ENCODE measurements at regions of chr1 and their contacts with region 1.

Region 1: DNA sequence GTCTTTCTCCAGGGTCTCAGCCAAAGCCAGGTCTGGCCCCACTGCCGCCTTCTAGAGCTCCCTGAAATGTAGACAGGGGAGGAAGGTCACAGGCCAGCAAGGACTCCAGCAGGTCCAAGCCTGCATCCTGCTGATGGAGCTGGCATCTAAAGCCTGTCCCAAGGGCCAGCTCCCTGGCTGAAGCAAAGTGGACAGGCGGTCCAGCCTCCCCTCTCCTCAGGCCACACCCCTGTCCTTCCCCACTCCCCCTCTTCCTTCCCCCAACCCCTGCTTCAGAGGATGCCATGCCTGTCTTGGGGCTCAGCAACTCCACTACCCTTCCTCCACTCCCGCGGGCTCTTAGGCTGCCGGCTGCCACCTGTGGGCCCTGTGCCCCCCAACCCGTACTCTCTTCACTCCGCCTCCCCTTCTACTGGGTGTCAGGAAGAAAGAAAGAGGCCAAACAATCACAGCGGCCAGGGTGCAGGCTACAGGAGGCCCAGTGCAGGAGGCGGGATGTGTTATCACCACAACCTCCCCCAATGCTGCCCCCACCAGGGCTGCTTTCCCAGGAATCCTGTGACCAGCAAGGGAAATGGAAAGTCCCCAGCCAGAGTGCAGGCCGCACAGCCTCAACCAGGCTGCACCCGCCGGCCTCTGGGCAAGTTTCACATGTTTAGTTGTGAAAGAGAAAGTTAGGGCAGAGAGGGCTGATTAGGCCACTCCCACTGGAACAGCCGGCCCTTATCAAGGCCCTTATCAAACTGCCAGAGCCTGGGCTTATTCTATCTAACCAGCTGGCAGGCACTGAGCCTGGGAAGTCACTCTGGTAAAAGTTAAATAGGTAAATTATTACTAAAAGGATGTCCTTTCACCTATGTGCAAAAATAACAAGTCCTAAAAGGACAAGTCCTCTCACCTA is 34.1 kb downstream of the ACOT7 start:
- DNase-seq: no peak
- ATAC-seq: peak in 1 of 2 donors; percentile 27
- H3K4me3 ChIP-seq: no peak overlapping the region
- H3K27ac ChIP-seq: peak overlapping the region in 3 of 4 donors; percentile 42 to 64 (median 60)
- H3K4me1 ChIP-seq: peaks cover under 1 to 9% of the 10 kb centered on the region in 2 donors
- H3K27me3 ChIP-seq: no peaks in the 10 kb centered on the region
- CTCF ChIP-seq: no peak
- POLR2A ChIP-seq: no peak

Region 2: DNA sequence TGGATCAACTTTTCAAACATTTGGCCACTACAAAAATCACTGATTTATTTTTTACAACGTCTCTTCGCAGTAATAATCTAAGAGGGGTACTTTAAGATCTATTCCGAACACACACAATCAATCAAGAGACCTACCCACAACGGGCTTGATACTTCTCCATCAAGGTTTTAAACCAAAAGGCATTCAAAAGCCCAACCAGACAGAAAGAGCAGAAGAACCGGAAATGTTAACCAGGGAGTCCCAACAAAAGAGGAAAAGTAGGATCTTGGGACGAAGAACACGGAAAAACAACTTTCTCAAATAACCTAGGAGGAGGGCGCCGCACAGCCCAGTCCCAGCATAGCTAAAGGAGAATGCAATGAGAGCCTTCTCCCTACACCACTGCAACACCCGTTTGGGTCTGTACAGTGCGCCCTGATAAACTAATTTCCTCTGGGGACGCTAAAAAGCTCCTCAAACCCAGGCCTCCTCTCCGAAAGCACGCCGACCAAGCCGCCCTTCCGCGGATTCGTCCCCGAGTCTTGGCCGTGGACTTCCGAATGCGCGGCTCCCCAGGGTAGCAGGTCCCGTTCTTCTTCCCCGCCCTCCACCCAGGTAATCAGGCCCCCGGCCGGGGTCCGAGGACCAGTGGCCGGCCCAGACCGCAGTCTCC is 160.7 kb before region 1 on chr1:
- in situ Hi-C with region 1: no loop called
- intact Hi-C with region 1: no loop called
- DNase-seq: no peak
- ATAC-seq: peak; percentile 7 to 15
- H3K4me3 ChIP-seq: peak overlapping the region; percentile 78 to 96 (median 91)
- H3K27ac ChIP-seq: peak overlapping the region; percentile 82 to 84 (median 83)
- H3K4me1 ChIP-seq: peaks cover 13 to 21% of the 10 kb centered on the region in 2 donors
- H3K27me3 ChIP-seq: no peaks in the 10 kb centered on the region
- CTCF ChIP-seq: no peak
- POLR2A ChIP-seq: no peak

Region 3: GRCh38 chr1:6259491-6260425 is 99.7 kb before region 1 on chr1:
- in situ Hi-C with region 1: no loop called
- intact Hi-C with region 1: no loop called
- DNase-seq: peak; percentile 50 to 59
- ATAC-seq: peak; percentile 50 to 63
- H3K4me3 ChIP-seq: peak overlapping the region; percentile 49 to 56 (median 54)
- H3K27ac ChIP-seq: peak overlapping the region in 3 of 4 donors; percentile 34 to 61 (median 49)
- H3K4me1 ChIP-seq: peaks cover 0 to 16% of the 10 kb centered on the region in 2 donors
- H3K27me3 ChIP-seq: peaks cover 30 to 51% (median 44%) of the 10 kb centered on the region in 3 donors
- CTCF ChIP-seq: peak in 1 of 5 experiments; percentile 10
- POLR2A ChIP-seq: no peak

Region 4: GRCh38 chr1:6419397-6419803 is 59.9 kb after region 1 on chr1:
- in situ Hi-C with region 1: no loop called
- intact Hi-C with region 1: no loop called
- DNase-seq: no peak
- ATAC-seq: no peak
- H3K4me3 ChIP-seq: peak overlapping the region; percentile 37 to 57 (median 41)
- H3K27ac ChIP-seq: no peak overlapping the region
- H3K4me1 ChIP-seq: peaks cover 17 to 25% of the 10 kb centered on the region in 2 donors
- H3K27me3 ChIP-seq: peaks cover 94 to 98% (median 98%) of the 10 kb centered on the region in 3 donors
- CTCF ChIP-seq: no peak
- POLR2A ChIP-seq: no peak

Region 5: GRCh38 chr1:6438047-6438525 is 78.6 kb after region 1 on chr1:
- in situ Hi-C with region 1: no loop called
- intact Hi-C with region 1: loop called (anchors 2 kb)
- DNase-seq: peak; percentile 22 to 37
- ATAC-seq: peak; percentile 71 to 84
- H3K4me3 ChIP-seq: no peak overlapping the region
- H3K27ac ChIP-seq: no peak overlapping the region
- H3K4me1 ChIP-seq: no peaks in the 10 kb centered on the region
- H3K27me3 ChIP-seq: peaks cover 25 to 42% (median 40%) of the 10 kb centered on the region in 3 donors
- CTCF ChIP-seq: peak; percentile 75 to 94 (median 84)
- POLR2A ChIP-seq: no peak

Region 6: GRCh38 chr1:6686294-6686693 is 326.8 kb after region 1 on chr1:
- in situ Hi-C with region 1: no loop called
- intact Hi-C with region 1: no loop called
- DNase-seq: peak; percentile 58 to 83
- ATAC-seq: peak; percentile 94 to 98
- H3K4me3 ChIP-seq: no peak overlapping the region
- H3K27ac ChIP-seq: peak overlapping the region in 3 of 4 donors; percentile 49 to 70 (median 63)
- H3K4me1 ChIP-seq: peaks cover 22 to 28% of the 10 kb centered on the region in 2 donors
- H3K27me3 ChIP-seq: no peaks in the 10 kb centered on the region
- CTCF ChIP-seq: no peak
- POLR2A ChIP-seq: no peak